Gastrocnemius medialis (tissue), 4 donors: ENCODE measurements at regions of chr21 and their contacts with region 1.

Region 1: GRCh38 chr21:34202553-34203372 is 129.4 kb downstream of the MRPS6 start:
- DNase-seq: peak in 1 of 2 donors; percentile 43
- ATAC-seq: peak; percentile 10 to 27
- H3K4me3 ChIP-seq: peak overlapping the region in 3 of 4 donors; percentile 60 to 65 (median 62)
- H3K27ac ChIP-seq: peak overlapping the region; percentile 43 to 84 (median 68)
- H3K4me1 ChIP-seq: peaks cover 30 to 43% of the 10 kb centered on the region in 2 donors
- H3K27me3 ChIP-seq: no peaks in the 10 kb centered on the region
- CTCF ChIP-seq: no peak
- POLR2A ChIP-seq: no peak

Region 2: GRCh38 chr21:34129039-34129891 is 73.5 kb before region 1 on chr21:
- in situ Hi-C with region 1: no loop called
- intact Hi-C with region 1: loop called (anchors 2 kb)
- DNase-seq: peak; percentile 74 to 81
- ATAC-seq: peak; percentile 78 to 81
- H3K4me3 ChIP-seq: peak overlapping the region; percentile 30 to 41 (median 38)
- H3K27ac ChIP-seq: peak overlapping the region; percentile 79 to 95 (median 88)
- H3K4me1 ChIP-seq: peaks cover 71 to 92% of the 10 kb centered on the region in 2 donors
- H3K27me3 ChIP-seq: no peaks in the 10 kb centered on the region
- CTCF ChIP-seq: peak in 3 of 5 experiments; percentile 19 to 53 (median 50)
- POLR2A ChIP-seq: peak in 1 of 2 donors; percentile 2